Mammary epithelial cell (primary cell): ENCODE measurements at regions of chr19 and their contacts with region 1.

Region 1: DNA sequence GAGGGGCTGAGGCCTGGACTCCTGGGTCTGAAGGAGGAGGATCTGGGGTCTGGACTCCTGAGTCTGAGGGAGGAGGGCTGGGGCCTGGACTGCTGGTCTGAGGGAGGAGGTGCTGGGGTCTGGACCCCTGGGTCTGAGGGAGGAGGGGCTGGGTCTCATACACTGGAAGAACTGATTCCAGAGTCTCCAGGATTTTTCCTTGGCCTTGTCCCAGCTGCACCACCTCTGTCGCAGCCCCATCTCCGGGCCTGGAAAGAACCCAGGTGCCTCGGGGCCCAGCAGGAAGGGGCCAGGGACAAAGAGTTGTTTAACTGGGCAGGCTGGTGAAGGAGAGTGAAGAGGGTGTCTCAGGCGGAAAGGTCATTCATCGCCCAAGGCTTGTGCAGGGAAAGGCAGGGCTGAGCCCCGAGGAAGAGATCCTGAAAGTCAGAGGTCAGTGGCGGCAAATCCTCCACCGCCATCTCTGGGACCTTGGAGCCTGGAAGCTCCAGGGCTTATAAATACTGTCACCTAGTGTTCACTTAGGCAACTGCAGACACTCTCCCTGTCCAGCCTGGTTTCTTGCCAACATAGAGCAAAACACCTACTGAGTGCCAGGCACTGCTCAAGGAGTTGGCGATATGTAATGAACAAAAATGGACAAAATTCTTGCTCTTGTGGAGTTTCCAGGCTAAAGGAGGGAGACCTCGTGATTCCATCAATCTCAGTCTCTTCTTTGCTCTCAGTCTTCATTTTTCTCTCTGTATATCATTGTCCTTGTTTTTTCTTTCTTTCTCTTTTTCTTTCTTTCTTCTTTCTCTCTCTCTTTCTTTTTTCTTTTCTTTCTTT is 4.4 kb upstream of the KCNN4 start:
- DNase-seq: peak; percentile 67
- H3K4me3 ChIP-seq: no peak overlapping the region
- H3K27ac ChIP-seq: peak overlapping the region; percentile 88
- H3K4me1 ChIP-seq: peaks cover 51% of the 10 kb centered on the region
- H3K27me3 ChIP-seq: no peaks in the 10 kb centered on the region
- CTCF ChIP-seq: peak; percentile 99 to 100

Region 2: DNA sequence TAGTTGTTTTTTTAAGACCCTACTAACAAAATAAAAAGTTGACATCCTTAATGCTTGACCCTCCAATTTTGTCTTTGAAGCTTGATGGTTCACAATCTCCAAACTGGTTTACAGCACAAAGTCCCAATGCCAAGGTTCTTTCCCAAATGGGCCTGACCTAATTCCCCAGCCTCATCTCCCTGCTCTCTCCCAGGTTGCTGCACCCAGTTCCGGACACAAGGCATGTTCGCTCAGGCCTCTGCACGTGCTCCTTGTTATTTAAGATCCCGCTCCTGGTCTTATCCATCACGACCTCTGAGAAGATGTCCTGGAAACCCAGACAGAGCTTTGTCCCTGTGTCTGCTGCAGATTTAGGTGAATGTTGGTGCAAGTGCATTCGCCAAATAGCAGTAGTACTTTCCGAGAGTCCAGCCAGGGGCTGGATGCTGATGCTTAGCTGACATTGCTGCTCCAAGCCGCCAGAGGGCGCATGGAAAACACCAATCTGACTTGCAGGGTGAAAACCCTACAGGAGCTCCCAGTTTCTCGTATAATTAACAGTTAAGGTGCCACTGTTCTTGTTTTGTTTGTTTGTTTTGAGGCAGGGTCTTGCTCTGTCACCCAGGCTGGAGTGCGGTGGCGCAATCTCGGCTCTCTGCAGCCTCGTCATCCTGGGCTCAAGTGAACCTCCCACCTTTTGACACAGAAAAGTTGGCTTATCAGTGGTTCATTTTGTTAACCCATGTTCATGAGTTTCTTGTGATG is 338.3 kb before region 1 on chr19:
- CTCF ChIA-PET with region 1: no interaction called
- dilution Hi-C with region 1: no loop called
- in situ Hi-C with region 1: no loop called
- intact Hi-C with region 1: loop called (anchors 10 kb)
- DNase-seq: peak; percentile 62
- H3K4me3 ChIP-seq: no peak overlapping the region
- H3K27ac ChIP-seq: no peak overlapping the region
- H3K4me1 ChIP-seq: peaks cover 4% of the 10 kb centered on the region
- H3K27me3 ChIP-seq: no peaks in the 10 kb centered on the region
- CTCF ChIP-seq: peak; percentile 93 to 97

Region 3: GRCh38 chr19:43668406-43669158 is 116.6 kb before region 1 on chr19:
- CTCF ChIA-PET with region 1: no interaction called
- dilution Hi-C with region 1: no loop called
- in situ Hi-C with region 1: no loop called
- intact Hi-C with region 1: loop called (anchors 1 kb)
- DNase-seq: peak; percentile 99
- H3K4me3 ChIP-seq: peak overlapping the region; percentile 69 to 77 (median 70)
- H3K27ac ChIP-seq: peak overlapping the region; percentile 96
- H3K4me1 ChIP-seq: peaks cover 13% of the 10 kb centered on the region
- H3K27me3 ChIP-seq: no peaks in the 10 kb centered on the region
- CTCF ChIP-seq: no peak

Region 4: GRCh38 chr19:43754503-43755255 is 30.5 kb before region 1 on chr19 and contains the start of gene SMG9:
- CTCF ChIA-PET with region 1: no interaction called
- dilution Hi-C with region 1: no loop called
- in situ Hi-C with region 1: loop called (anchors 5 kb)
- intact Hi-C with region 1: loop called (anchors 1 kb)
- DNase-seq: peak; percentile 98
- H3K4me3 ChIP-seq: peak within 1 kb of the TSS; percentile 40 to 70 (median 60)
- H3K27ac ChIP-seq: peak within 1 kb of the TSS; percentile 99
- H3K4me1 ChIP-seq: peaks cover 66% of the 10 kb centered on the region
- H3K27me3 ChIP-seq: no peaks in the 10 kb centered on the region
- CTCF ChIP-seq: no peak
- total RNA-seq, gene SMG9: 7.5 to 62.7 TPM

Region 5: GRCh38 chr19:43809762-43810696 is 24.8 kb after region 1 on chr19:
- CTCF ChIA-PET with region 1: no interaction called
- dilution Hi-C with region 1: no loop called
- in situ Hi-C with region 1: no loop called
- intact Hi-C with region 1: loop called (anchors 2 kb)
- DNase-seq: peak; percentile 60
- H3K4me3 ChIP-seq: no peak overlapping the region
- H3K27ac ChIP-seq: no peak overlapping the region
- H3K4me1 ChIP-seq: peaks cover 19% of the 10 kb centered on the region
- H3K27me3 ChIP-seq: no peaks in the 10 kb centered on the region
- CTCF ChIP-seq: peak; percentile 45 to 69